AG04450 (cell line): ENCODE measurements at regions of chr3 and their contacts with region 1.

Region 1: GRCh38 chr3:146145642-146146041 is 15.3 kb downstream of the PLOD2 start:
- DNase-seq: no peak
- H3K4me3 ChIP-seq: no peak overlapping the region
- H3K27ac ChIP-seq: no peak overlapping the region
- H3K27me3 ChIP-seq: no peaks in the 10 kb centered on the region
- CTCF ChIP-seq: no peak

Region 2: DNA sequence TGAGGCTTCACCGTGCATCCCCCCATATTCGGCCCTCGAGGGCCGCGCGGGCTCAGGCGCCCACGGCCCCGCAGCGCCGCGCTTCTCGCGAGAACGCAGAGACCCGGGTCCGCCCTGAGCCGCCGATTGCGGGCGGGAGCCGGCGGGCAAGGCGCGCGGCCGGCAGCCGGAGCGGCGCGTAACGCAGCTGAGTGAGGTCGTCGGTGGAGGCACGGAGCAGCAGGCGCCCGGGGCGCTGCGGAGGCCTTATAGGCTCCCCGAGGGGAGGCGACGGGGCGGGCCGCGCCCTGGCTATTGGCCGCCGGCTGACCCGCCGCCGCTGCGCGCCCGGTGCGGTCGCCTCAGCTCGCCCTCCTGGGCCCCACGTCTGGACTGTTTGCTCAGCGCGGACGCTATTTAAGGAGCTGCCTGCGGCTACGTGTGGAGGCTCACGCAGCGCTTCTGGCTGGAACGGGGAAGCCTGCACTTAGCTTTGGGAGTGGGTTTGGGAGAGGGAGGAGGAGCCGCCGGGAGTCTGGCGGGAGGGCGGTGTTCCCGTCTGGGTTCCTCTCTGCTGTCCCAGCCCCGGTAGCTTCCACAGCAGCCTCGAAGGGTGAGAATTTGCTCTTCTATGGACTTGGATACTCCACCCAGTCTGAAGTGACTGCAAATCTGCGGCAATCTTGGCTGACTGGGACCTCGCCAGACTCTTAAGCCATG is 15.5 kb after region 1 on chr3 and contains the start of gene PLOD2:
- CTCF ChIA-PET with region 1: interaction called, 13 read pairs
- POLR2A ChIA-PET with region 1: interaction called, 6 read pairs
- DNase-seq: no peak
- H3K4me3 ChIP-seq: peak within 1 kb of the TSS; percentile 75
- H3K27ac ChIP-seq: peak within 1 kb of the TSS; percentile 90
- H3K27me3 ChIP-seq: no peaks in the 10 kb centered on the region
- CTCF ChIP-seq: no peak
- polyA plus RNA-seq, gene PLOD2: 63.7 and 88.9 TPM in 2 replicates